ENCODE measurements at regions of chr17 and their contacts with region 1.

Region 1: DNA sequence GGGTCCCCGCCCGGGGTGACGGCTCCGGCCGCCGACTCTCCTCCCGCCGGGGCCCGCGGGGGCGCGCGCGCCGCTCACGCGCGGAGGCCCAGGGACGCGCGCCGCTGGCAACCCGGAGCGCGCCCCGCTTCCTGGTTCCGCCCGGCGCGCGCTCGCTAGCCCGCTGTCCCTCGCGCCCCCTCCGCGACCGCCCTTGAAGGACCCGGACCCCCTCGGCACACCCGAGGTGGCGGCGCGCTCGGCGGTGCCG is at the start of gene STAT5B:
- DNase-seq: peak in 8 of 9 donors; percentile 52 to 82 (median 73)
- ATAC-seq: peak; percentile 84
- H3K4me3 ChIP-seq: peak within 1 kb of the TSS; percentile 93
- H3K4me3 Mint-ChIP-seq: peak within 1 kb of the TSS; percentile 95 to 100 (median 98)
- H3K27ac ChIP-seq: peak within 1 kb of the TSS; percentile 90
- H3K27ac Mint-ChIP-seq: peak within 1 kb of the TSS; percentile 91 to 99 (median 97)
- H3K4me1 ChIP-seq: peaks cover 30 to 32% of the 10 kb centered on the region in 2 donors
- H3K4me1 Mint-ChIP-seq: peaks cover 34 to 56% (median 50%) of the 10 kb centered on the region in 7 donors
- H3K27me3 ChIP-seq: no peaks in the 10 kb centered on the region
- H3K27me3 Mint-ChIP-seq: no peaks in the 10 kb centered on the region
- total RNA-seq, gene STAT5B: 143 to 192 (median 183) TPM

Region 2: DNA sequence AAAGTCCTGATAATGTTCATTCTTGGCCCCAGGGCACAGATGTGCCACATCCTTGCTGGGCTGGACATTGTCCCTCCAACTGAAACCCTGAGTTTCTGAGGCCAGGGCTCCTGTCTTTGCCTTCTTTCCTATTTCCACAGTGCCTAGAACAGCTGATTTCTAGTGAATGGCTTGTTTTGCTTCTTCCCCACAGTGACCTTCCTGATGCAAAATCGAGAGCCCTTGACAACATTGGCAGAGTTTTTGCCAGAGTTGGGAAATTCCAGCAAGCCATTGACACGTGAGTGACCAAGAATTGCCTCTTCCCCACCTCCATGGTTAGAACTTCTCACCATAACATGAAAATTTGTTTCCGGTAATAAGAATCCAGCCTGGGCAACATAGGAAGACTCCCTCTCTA is 331.3 kb before region 1 on chr17:
- CTCF ChIA-PET with region 1: no interaction called
- POLR2A ChIA-PET with region 1: no interaction called
- intact Hi-C with region 1: no loop called
- DNase-seq: no peak
- ATAC-seq: no peak
- H3K4me3 ChIP-seq: no peak overlapping the region
- H3K4me3 Mint-ChIP-seq: no peak overlapping the region
- H3K27ac ChIP-seq: no peak overlapping the region
- H3K27ac Mint-ChIP-seq: no peak overlapping the region
- H3K4me1 ChIP-seq: no peaks in the 10 kb centered on the region
- H3K4me1 Mint-ChIP-seq: no peaks in the 10 kb centered on the region
- H3K27me3 ChIP-seq: no peaks in the 10 kb centered on the region
- H3K27me3 Mint-ChIP-seq: peaks cover 0 to 12% (median 3%) of the 10 kb centered on the region in 5 donors

Region 3: DNA sequence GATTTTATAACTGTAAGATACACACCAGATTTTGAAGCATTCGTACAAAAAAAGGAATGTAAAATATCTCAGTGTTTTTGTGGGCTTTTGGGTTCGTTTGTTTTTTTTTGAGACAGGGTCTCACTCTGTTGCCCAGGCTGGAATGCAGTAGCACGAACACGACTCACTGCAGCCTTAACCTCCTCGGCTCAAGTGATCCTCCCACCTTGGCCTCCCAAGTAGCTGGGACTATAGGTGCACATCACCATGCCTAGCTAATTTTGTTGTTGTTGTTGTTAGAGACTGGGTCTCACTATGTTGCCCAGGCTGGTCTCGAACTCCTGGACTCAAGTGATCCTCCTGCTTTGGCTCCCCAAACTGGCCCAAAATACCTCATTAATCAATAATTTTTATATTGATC is 16.0 kb before region 1 on chr17:
- CTCF ChIA-PET with region 1: interaction called, 3 read pairs
- POLR2A ChIA-PET with region 1: interaction called, 5 read pairs
- intact Hi-C with region 1: loop called in 1 of 2 experiments (anchors 1 kb)
- DNase-seq: no peak
- ATAC-seq: no peak
- H3K4me3 ChIP-seq: no peak overlapping the region
- H3K4me3 Mint-ChIP-seq: peak overlapping the region in 1 of 10 donors; percentile 6
- H3K27ac ChIP-seq: no peak overlapping the region
- H3K27ac Mint-ChIP-seq: peak overlapping the region in 7 of 9 donors; percentile 20 to 89 (median 68)
- H3K4me1 ChIP-seq: peaks cover 5 to 25% of the 10 kb centered on the region in 2 donors
- H3K4me1 Mint-ChIP-seq: peaks cover 21 to 64% (median 44%) of the 10 kb centered on the region in 7 donors
- H3K27me3 ChIP-seq: no peaks in the 10 kb centered on the region
- H3K27me3 Mint-ChIP-seq: no peaks in the 10 kb centered on the region

Region 4: GRCh38 chr17:42287926-42288802 is 11.9 kb after region 1 on chr17 and contains the start of gene STAT5A:
- CTCF ChIA-PET with region 1: interaction called, 5 read pairs
- POLR2A ChIA-PET with region 1: interaction called, 193 read pairs
- intact Hi-C with region 1: loop called (anchors 1 kb)
- DNase-seq: peak; percentile 58 to 83 (median 79)
- ATAC-seq: peak; percentile 90
- H3K4me3 ChIP-seq: peak within 1 kb of the TSS; percentile 88
- H3K4me3 Mint-ChIP-seq: peak within 1 kb of the TSS; percentile 87 to 97 (median 93)
- H3K27ac ChIP-seq: peak within 1 kb of the TSS; percentile 93
- H3K27ac Mint-ChIP-seq: peak within 1 kb of the TSS; percentile 93 to 99 (median 96)
- H3K4me1 ChIP-seq: peaks cover 18 to 24% of the 10 kb centered on the region in 2 donors
- H3K4me1 Mint-ChIP-seq: peaks cover 27 to 65% (median 54%) of the 10 kb centered on the region in 7 donors
- H3K27me3 ChIP-seq: no peaks in the 10 kb centered on the region
- H3K27me3 Mint-ChIP-seq: no peaks in the 10 kb centered on the region
- total RNA-seq, gene STAT5A: 111 to 162 (median 150) TPM

Measured in naive thymus-derived CD4-positive, alpha-beta T cell (primary cell).